Gastrocnemius medialis (tissue), 4 donors: ENCODE measurements at regions of chr7 and their contacts with region 1.

Region 1: GRCh38 chr7:56051339-56052191 is at the starts of genes CCT6A and PSPH:
- DNase-seq: peak; percentile 96 to 97
- ATAC-seq: peak; percentile 96 to 97
- H3K4me3 ChIP-seq: peak within 1 kb of the TSS; percentile 76 to 86 (median 78)
- H3K27ac ChIP-seq: peak within 1 kb of the TSS; percentile 86 to 95 (median 90)
- H3K4me1 ChIP-seq: peaks cover 18 to 22% of the 10 kb centered on the region in 2 donors
- H3K27me3 ChIP-seq: no peaks in the 10 kb centered on the region
- CTCF ChIP-seq: no peak
- POLR2A ChIP-seq: peak; percentile 88
- total RNA-seq, gene CCT6A: 95.9 to 158 (median 114) TPM
- total RNA-seq, gene PSPH: 2.1 to 4.7 (median 3.9) TPM

Region 2: DNA sequence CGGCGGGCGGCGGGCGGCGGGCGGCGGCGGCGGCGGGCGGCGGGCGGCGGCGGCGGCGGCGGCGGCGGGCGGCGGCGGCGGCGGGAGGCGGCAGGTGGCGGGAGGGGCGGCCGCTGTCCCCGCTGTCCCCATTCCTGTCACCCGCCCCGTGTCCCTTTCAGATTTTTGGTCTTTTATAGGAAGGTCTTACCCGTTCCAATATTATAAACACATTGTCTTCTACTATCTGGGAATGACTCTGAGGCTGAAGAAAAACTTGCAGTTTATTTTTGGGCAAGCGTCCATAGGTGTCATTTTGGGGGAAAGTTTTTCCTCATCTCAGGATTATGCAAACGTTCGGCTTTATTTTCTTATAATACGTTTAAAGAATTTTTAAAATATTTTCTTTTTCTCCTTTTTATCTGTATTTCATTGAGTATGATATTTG is 163.7 kb before region 1 on chr7:
- in situ Hi-C with region 1: no loop called
- intact Hi-C with region 1: loop called (anchors 5 kb)
- DNase-seq: no peak
- ATAC-seq: no peak
- H3K4me3 ChIP-seq: peak overlapping the region; percentile 54 to 83 (median 60)
- H3K27ac ChIP-seq: peak overlapping the region; percentile 75 to 81 (median 79)
- H3K4me1 ChIP-seq: no peaks in the 10 kb centered on the region
- H3K27me3 ChIP-seq: no peaks in the 10 kb centered on the region
- CTCF ChIP-seq: no peak
- POLR2A ChIP-seq: no peak

Region 3: DNA sequence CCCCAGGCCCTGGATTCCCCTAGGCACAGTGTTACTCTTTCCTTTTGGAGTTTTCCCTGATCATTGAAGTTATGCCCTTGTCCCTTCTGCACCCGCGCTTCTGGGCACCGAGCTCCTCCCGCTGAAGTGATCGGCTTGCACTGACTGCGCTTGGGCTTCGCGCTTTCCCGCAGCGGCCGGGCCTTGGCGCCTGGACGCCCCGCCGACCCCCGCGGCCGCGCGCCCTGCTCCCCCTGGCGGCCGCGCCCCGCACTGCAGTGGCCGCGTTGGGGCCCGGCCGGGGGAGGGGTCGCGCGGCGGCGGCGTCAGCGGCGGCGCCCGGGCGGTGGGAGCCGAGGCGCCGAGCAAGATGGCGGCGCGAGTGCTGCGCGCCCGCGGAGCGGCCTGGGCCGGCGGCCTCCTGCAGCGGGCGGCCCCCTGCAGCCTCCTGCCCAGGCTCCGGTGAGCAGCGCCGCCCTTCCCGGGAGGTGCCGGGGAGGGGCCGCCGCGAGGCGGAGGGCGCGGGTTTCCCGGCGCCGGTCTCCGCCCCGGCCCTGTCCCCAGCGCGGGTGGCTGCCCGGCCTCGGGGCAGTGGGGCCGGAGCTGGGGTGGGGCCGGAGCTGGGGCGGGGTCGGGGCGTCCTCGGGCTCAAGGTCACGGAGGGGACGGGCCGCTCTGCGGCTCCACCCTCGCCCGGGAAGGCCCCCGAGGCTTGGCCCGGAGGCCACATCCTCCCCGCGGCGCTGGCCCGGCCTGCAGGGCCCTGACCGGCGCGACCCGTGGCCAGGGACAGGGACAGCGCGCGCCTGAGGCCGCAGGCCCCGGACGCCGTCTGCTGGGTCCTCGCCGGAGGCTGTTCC is 87.1 kb before region 1 on chr7 and contains the start of gene NIPSNAP2:
- in situ Hi-C with region 1: loop called in 1 of 4 experiments (anchors 25 kb)
- intact Hi-C with region 1: loop called (anchors 5 kb)
- DNase-seq: peak; percentile 67 to 83
- ATAC-seq: peak; percentile 58 to 72
- H3K4me3 ChIP-seq: peak within 1 kb of the TSS; percentile 68 to 71 (median 70)
- H3K27ac ChIP-seq: peak within 1 kb of the TSS; percentile 96 to 98 (median 97)
- H3K4me1 ChIP-seq: peaks cover 42 to 47% of the 10 kb centered on the region in 2 donors
- H3K27me3 ChIP-seq: no peaks in the 10 kb centered on the region
- CTCF ChIP-seq: peak; percentile 36 to 96 (median 86)
- POLR2A ChIP-seq: peak; percentile 79 to 91
- total RNA-seq, gene NIPSNAP2: 234 to 382 (median 354) TPM

Region 4: DNA sequence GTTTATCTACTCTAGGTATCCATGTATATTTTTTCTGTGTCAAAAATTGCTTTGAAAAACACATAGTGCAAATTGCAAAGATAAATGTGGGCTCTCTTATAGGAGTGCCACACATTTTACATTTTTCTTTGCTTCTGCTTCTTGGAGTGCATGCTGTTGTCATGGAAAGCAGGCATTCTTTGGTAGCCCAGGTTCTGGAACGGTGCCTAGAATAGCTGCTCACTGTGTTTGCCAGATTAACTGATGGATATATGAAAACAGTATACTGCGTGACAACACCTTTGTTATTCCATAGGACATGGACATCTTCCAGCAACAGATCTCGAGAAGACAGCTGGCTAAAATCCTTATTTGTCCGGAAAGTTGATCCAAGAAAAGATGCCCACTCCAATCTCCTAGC is 73.7 kb before region 1 on chr7:
- in situ Hi-C with region 1: loop called in 1 of 4 experiments (anchors 25 kb)
- intact Hi-C with region 1: loop called (anchors 2 kb)
- DNase-seq: no peak
- ATAC-seq: no peak
- H3K4me3 ChIP-seq: no peak overlapping the region
- H3K27ac ChIP-seq: peak overlapping the region; percentile 96 to 98 (median 97)
- H3K4me1 ChIP-seq: peaks cover 34 to 48% of the 10 kb centered on the region in 2 donors
- H3K27me3 ChIP-seq: no peaks in the 10 kb centered on the region
- CTCF ChIP-seq: no peak
- POLR2A ChIP-seq: no peak

Region 5: GRCh38 chr7:56063882-56064625 is 12.5 kb after region 1 on chr7 and contains the start of gene SUMF2:
- in situ Hi-C with region 1: no loop called
- intact Hi-C with region 1: loop called (anchors 1 kb)
- DNase-seq: peak; percentile 86 to 91
- ATAC-seq: peak; percentile 95
- H3K4me3 ChIP-seq: peak within 1 kb of the TSS; percentile 68 to 94 (median 91)
- H3K27ac ChIP-seq: peak within 1 kb of the TSS; percentile 87 to 97 (median 95)
- H3K4me1 ChIP-seq: peaks cover 6 to 13% of the 10 kb centered on the region in 2 donors
- H3K27me3 ChIP-seq: no peaks in the 10 kb centered on the region
- CTCF ChIP-seq: peak in 3 of 5 experiments; percentile 15 to 41 (median 31)
- POLR2A ChIP-seq: peak; percentile 89 to 91
- total RNA-seq, gene SUMF2: 29.8 to 32.0 (median 31.1) TPM

Region 6: GRCh38 chr7:56106108-56107073 is 54.8 kb after region 1 on chr7 and contains the start of gene CHCHD2:
- in situ Hi-C with region 1: no loop called
- intact Hi-C with region 1: loop called (anchors 2 kb)
- DNase-seq: peak; percentile 96 to 98
- ATAC-seq: peak; percentile 99 to 100
- H3K4me3 ChIP-seq: peak within 1 kb of the TSS; percentile 75 to 95 (median 86)
- H3K27ac ChIP-seq: peak within 1 kb of the TSS; percentile 92 to 98 (median 94)
- H3K4me1 ChIP-seq: peaks cover 18 to 19% of the 10 kb centered on the region in 2 donors
- H3K27me3 ChIP-seq: no peaks in the 10 kb centered on the region
- CTCF ChIP-seq: peak in 1 of 5 experiments; percentile 2
- POLR2A ChIP-seq: peak; percentile 92 to 93
- total RNA-seq, gene CHCHD2: 540 to 822 (median 655) TPM

Region 7: DNA sequence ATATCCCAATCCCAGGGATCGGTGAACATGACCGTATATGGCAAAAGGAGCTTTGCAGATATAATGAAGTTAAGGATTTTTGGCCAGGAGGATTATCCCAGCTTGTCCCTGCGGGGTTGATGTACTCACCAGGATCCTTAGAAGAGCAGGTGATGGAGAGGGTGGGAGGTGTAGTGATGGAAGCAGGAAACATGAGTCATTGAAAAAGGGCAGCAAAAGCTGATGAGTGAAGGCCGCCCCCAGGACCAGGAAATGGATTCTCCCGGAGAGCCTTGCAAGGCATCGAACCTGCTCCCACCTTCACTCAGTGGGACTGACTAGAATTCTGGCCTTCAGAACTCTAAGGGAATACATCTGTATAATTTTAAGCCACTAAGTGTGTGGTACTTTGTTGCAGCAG is 69.9 kb after region 1 on chr7:
- in situ Hi-C with region 1: no loop called
- intact Hi-C with region 1: no loop called
- DNase-seq: no peak
- ATAC-seq: no peak
- H3K4me3 ChIP-seq: no peak overlapping the region
- H3K27ac ChIP-seq: no peak overlapping the region
- H3K4me1 ChIP-seq: no peaks in the 10 kb centered on the region
- H3K27me3 ChIP-seq: peaks cover 0 to 6% (median 1%) of the 10 kb centered on the region in 3 donors
- CTCF ChIP-seq: no peak
- POLR2A ChIP-seq: no peak